ENCODE measurements at regions of chr17 and their contacts with region 1.

Region 1: GRCh38 chr17:2336852-2337543 is at the start of gene SGSM2:
- DNase-seq: peak; percentile 50
- H3K4me3 Mint-ChIP-seq: peak within 1 kb of the TSS; percentile 99
- H3K27ac Mint-ChIP-seq: peak within 1 kb of the TSS; percentile 96
- H3K4me1 Mint-ChIP-seq: no peaks in the 10 kb centered on the region
- H3K27me3 Mint-ChIP-seq: no peaks in the 10 kb centered on the region
- CTCF ChIP-seq: no peak
- total RNA-seq, gene SGSM2: 50.3 and 54.9 TPM in 2 replicates

Region 2: DNA sequence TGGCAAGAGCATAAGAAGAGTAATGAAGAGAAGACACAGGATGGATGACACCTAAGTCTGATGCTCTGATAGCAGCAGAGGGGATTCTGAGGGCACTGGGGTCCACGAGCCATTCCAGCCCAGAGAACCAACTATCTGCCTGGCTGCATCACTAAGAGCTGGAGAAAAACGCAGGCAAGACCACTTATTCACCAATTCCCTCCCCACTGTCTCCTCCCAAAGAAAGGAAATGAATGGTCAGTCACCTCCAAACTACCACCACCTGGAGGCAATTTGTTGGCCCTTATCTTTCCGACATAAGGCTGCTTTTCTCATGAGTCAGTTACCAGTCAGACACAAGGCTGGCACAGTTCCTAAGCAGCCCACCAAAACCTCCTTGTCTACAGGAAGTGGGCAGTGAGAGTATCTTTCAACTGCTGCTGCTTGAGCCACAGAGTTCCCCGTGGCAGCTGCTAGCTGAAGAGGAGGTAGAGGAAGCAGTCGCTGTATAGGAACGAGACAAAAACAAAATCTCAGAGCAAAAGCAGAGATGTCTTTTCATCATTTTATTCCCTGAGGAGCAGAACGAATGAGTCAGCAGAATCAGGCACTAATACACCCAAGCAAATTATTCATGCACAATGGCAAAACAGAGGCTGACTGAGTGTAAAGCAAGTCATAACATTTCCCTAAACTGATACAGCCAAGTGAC is 144.5 kb before region 1 on chr17:
- CTCF ChIA-PET with region 1: no interaction called
- intact Hi-C with region 1: no loop called
- DNase-seq: peak; percentile 39
- H3K4me3 Mint-ChIP-seq: no peak overlapping the region
- H3K27ac Mint-ChIP-seq: no peak overlapping the region
- H3K4me1 Mint-ChIP-seq: peaks cover 29% of the 10 kb centered on the region
- H3K27me3 Mint-ChIP-seq: no peaks in the 10 kb centered on the region
- CTCF ChIP-seq: no peak

Region 3: GRCh38 chr17:2347547-2348307 is 10.7 kb after region 1 on chr17:
- CTCF ChIA-PET with region 1: interaction called, 10 read pairs
- intact Hi-C with region 1: no loop called
- DNase-seq: peak; percentile 46
- H3K4me3 Mint-ChIP-seq: no peak overlapping the region
- H3K27ac Mint-ChIP-seq: no peak overlapping the region
- H3K4me1 Mint-ChIP-seq: peaks cover 8% of the 10 kb centered on the region
- H3K27me3 Mint-ChIP-seq: no peaks in the 10 kb centered on the region
- CTCF ChIP-seq: no peak